ENCODE measurements at regions of chr14 and their contacts with region 1.

Region 1: GRCh38 chr14:67526676-67527459 is 6.2 kb upstream of the PLEKHH1 start:
- DNase-seq: peak; percentile 62
- ATAC-seq: peak; percentile 94
- H3K4me3 Mint-ChIP-seq: no peak overlapping the region
- H3K27ac Mint-ChIP-seq: peak overlapping the region; percentile 64; the same call in 1 of the 2 replicates
- H3K4me1 Mint-ChIP-seq: peaks cover 17% of the 10 kb centered on the region
- H3K27me3 Mint-ChIP-seq: peaks cover 2% of the 10 kb centered on the region
- CTCF ChIP-seq: peak; percentile 18; the same call in 1 of the 2 replicates

Region 2: GRCh38 chr14:67435615-67436346 is 91.1 kb before region 1 on chr14:
- CTCF ChIA-PET with region 1: interaction called, 19 read pairs
- POLR2A ChIA-PET with region 1: no interaction called
- DNase-seq: no peak
- ATAC-seq: no peak
- H3K4me3 Mint-ChIP-seq: no peak overlapping the region
- H3K27ac Mint-ChIP-seq: no peak overlapping the region
- H3K4me1 Mint-ChIP-seq: no peaks in the 10 kb centered on the region
- H3K27me3 Mint-ChIP-seq: no peaks in the 10 kb centered on the region
- CTCF ChIP-seq: no peak

Region 3: GRCh38 chr14:67491741-67492505 is 34.9 kb before region 1 on chr14:
- CTCF ChIA-PET with region 1: interaction called, 13 read pairs
- POLR2A ChIA-PET with region 1: no interaction called
- DNase-seq: no peak
- ATAC-seq: peak; percentile 49
- H3K4me3 Mint-ChIP-seq: no peak overlapping the region
- H3K27ac Mint-ChIP-seq: no peak overlapping the region
- H3K4me1 Mint-ChIP-seq: peaks cover 23% of the 10 kb centered on the region
- H3K27me3 Mint-ChIP-seq: peaks cover 10% of the 10 kb centered on the region
- CTCF ChIP-seq: no peak

Region 4: DNA sequence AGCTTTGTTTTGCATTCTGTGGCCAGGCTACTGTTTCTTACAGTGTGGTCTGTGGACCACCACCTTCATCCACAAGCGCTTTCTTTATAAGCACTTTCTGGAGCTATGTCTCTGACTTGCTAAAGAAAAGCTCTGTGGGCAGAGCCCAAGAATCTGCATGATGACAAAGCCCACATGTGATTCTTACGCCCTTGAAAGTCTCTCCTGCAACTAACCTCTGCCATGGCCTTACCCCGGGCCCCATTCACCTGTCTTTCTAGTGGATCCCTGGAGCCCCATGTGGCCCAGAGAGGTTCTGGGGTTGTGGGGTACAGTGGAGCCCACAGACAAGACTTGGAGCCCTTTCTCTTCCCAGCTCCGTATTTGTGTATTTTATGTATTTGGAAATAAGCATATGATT is 22.9 kb after region 1 on chr14:
- CTCF ChIA-PET with region 1: interaction called, 15 read pairs
- POLR2A ChIA-PET with region 1: no interaction called
- DNase-seq: no peak
- ATAC-seq: no peak
- H3K4me3 Mint-ChIP-seq: no peak overlapping the region
- H3K27ac Mint-ChIP-seq: peak overlapping the region; percentile 88
- H3K4me1 Mint-ChIP-seq: peaks cover 2% of the 10 kb centered on the region; the same call in 1 of the 2 replicates
- H3K27me3 Mint-ChIP-seq: no peaks in the 10 kb centered on the region
- CTCF ChIP-seq: no peak

Region 5: DNA sequence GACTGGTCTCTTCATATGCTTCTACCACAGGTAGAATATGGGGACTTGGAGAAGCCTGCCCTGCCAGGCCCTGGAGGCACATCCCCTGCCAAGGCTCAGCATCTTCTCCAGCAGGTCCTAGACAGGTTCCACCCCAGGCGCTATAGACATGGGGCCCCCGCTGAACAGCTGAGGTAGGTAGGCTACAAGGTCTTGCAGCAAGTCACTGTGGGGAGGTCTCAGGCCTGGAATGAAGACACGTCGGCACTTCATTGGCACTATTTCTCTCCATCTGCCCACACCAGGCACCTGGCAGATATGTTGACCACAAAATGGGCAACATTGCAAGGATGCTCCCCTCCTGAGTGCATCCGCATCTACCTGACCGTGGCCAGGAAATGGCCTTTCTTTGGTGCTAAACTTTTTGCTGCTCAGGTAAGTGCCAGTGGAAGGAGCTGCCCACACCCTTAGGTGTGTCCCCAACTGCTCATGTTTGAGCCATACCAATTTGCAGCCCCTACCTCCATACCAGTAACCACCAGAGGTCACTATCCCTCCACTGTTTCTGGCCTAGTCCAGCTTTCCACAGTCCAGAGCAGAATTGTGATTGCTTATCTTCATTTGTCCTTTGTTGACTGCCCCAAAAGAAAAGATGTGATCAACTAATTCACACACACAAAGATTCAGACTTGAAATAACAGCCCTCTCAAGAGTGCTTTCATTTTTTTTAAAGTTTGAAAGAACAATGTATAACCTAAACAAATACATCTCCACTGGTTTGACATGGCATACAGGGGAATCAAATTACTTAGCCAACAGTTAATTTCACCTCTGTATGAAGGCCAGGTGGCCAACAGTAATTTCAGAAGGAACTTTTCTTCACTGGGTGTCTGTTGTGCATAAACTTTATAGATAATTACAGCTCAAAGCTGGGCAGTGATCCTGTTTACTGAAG is 57.1 kb after region 1 on chr14:
- CTCF ChIA-PET with region 1: interaction called, 30 read pairs
- POLR2A ChIA-PET with region 1: no interaction called
- DNase-seq: peak; percentile 29
- ATAC-seq: peak; percentile 92
- H3K4me3 Mint-ChIP-seq: no peak overlapping the region
- H3K27ac Mint-ChIP-seq: no peak overlapping the region
- H3K4me1 Mint-ChIP-seq: no peaks in the 10 kb centered on the region
- H3K27me3 Mint-ChIP-seq: no peaks in the 10 kb centered on the region
- CTCF ChIP-seq: peak; percentile 36; the same call in 1 of the 2 replicates

Region 6: DNA sequence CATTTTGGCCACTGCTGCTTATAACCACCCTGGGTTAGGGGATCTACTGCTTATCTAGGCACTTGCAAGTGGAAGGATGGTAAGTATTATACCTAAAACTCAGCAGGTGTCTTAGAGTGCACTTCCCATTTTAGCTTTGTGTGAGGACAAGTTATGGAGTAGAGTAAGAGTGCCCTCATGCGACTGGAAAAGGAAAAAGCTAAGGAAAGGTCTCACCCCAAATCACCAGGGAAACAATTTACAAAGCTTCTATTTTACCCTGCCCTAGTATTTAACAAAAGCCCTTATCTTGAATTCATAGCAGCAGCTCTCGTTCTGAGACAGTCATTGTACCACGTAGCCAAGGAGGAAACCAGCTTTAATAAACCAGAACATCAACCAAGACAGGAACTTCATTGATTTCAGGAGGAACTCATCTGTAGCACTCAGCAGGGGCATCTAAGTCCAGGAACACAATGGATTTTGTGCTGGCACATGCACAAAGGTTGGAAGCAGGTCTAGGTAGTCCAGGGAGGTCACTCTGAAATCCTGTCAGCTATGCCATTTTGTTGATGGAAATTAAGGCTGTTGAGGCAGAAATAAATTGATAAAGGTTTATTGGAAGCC is 177.7 kb after region 1 on chr14:
- CTCF ChIA-PET with region 1: interaction called, 38 read pairs
- POLR2A ChIA-PET with region 1: interaction called, 5 read pairs
- DNase-seq: no peak
- ATAC-seq: peak; percentile 94
- H3K4me3 Mint-ChIP-seq: no peak overlapping the region
- H3K27ac Mint-ChIP-seq: no peak overlapping the region
- H3K4me1 Mint-ChIP-seq: 0 out of 2 replicates have a peak, but pooled peaks cover 3% of the 10 kb centered on the region
- H3K27me3 Mint-ChIP-seq: no peaks in the 10 kb centered on the region
- CTCF ChIP-seq: no peak